CD4-positive, alpha-beta T cell (primary cell): ENCODE measurements at regions of chr20 and their contacts with region 1.

Region 1: DNA sequence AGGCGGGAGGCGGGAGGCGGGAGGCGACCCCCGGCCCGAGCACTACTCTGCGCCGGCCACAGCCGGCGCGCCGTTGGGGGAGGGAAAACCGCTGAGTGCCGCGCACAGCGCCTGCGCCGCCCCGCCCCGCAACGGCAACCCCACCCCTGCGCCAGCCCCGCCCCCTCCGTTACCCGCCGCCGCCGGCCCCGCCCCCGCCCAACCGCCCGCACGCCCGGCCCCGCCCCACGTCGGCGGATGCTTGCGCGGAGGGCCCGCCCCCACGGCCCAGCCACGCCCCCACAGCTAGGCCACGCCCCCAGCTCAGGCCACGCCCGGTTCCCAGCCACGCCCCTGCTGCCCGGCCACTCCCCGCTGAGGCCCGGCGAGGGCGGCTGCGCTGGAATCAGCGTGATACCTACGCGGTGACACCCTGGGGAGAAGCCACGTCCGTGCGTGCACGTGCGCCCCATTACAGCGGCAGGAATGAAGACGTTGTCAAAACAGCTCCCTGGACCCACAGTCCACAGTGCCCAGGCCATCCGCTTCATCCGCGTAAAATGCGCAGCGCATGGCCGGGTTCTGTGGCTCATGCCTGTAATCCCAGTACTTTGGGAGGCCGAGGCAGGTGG is at the start of gene TCFL5:
- DNase-seq: peak; percentile 88 to 98 (median 92)
- ATAC-seq: peak; percentile 87
- H3K4me3 ChIP-seq: peak within 1 kb of the TSS; percentile 39
- H3K4me3 Mint-ChIP-seq: peak within 1 kb of the TSS; percentile 83
- H3K27ac ChIP-seq: peak within 1 kb of the TSS in 1 of 2 donors; percentile 21
- H3K27ac Mint-ChIP-seq: peak within 1 kb of the TSS; percentile 83
- H3K4me1 ChIP-seq: peaks cover 13% of the 10 kb centered on the region
- H3K4me1 Mint-ChIP-seq: peaks cover 27% of the 10 kb centered on the region
- H3K27me3 ChIP-seq: no peaks in the 10 kb centered on the region
- H3K27me3 Mint-ChIP-seq: no peaks in the 10 kb centered on the region
- CTCF ChIP-seq: no peak
- total RNA-seq, gene TCFL5: 5.9 to 6.3 TPM

Region 2: GRCh38 chr20:62808211-62808865 is 53.5 kb before region 1 on chr20:
- CTCF ChIA-PET with region 1: no interaction called
- POLR2A ChIA-PET with region 1: interaction called, 4 read pairs
- intact Hi-C with region 1: loop called in 1 of 2 experiments (anchors 5 kb)
- DNase-seq: peak; percentile 64 to 85 (median 72)
- ATAC-seq: peak; percentile 58
- H3K4me3 ChIP-seq: no peak overlapping the region
- H3K4me3 Mint-ChIP-seq: peak overlapping the region; percentile 89
- H3K27ac ChIP-seq: no peak overlapping the region
- H3K27ac Mint-ChIP-seq: peak overlapping the region; percentile 84
- H3K4me1 ChIP-seq: peaks cover 41% of the 10 kb centered on the region
- H3K4me1 Mint-ChIP-seq: peaks cover 28% of the 10 kb centered on the region
- H3K27me3 ChIP-seq: no peaks in the 10 kb centered on the region
- H3K27me3 Mint-ChIP-seq: peaks cover 4% of the 10 kb centered on the region
- CTCF ChIP-seq: peak; percentile 91

Region 3: GRCh38 chr20:62891111-62891510 is 29.3 kb after region 1 on chr20:
- CTCF ChIA-PET with region 1: no interaction called
- POLR2A ChIA-PET with region 1: interaction called, 11 read pairs
- intact Hi-C with region 1: no loop called
- DNase-seq: peak in 12 of 14 experiments; percentile 16 to 78 (median 61)
- ATAC-seq: peak; percentile 71
- H3K4me3 ChIP-seq: no peak overlapping the region
- H3K4me3 Mint-ChIP-seq: peak overlapping the region; percentile 32
- H3K27ac ChIP-seq: peak overlapping the region; percentile 14 to 68
- H3K27ac Mint-ChIP-seq: peak overlapping the region; percentile 96
- H3K4me1 ChIP-seq: peaks cover 64% of the 10 kb centered on the region
- H3K4me1 Mint-ChIP-seq: peaks cover 45% of the 10 kb centered on the region
- H3K27me3 ChIP-seq: no peaks in the 10 kb centered on the region
- H3K27me3 Mint-ChIP-seq: no peaks in the 10 kb centered on the region
- CTCF ChIP-seq: no peak

Region 4: GRCh38 chr20:62926239-62927104 is 64.6 kb after region 1 on chr20 and contains the start of gene DIDO1:
- CTCF ChIA-PET with region 1: no interaction called
- POLR2A ChIA-PET with region 1: interaction called, 9 read pairs
- intact Hi-C with region 1: loop called in 1 of 2 experiments (anchors 2 kb)
- DNase-seq: peak; percentile 78 to 96 (median 90)
- ATAC-seq: peak; percentile 74
- H3K4me3 ChIP-seq: peak within 1 kb of the TSS; percentile 99
- H3K4me3 Mint-ChIP-seq: peak within 1 kb of the TSS; percentile 98
- H3K27ac ChIP-seq: peak within 1 kb of the TSS; percentile 86 to 89
- H3K27ac Mint-ChIP-seq: peak within 1 kb of the TSS; percentile 89
- H3K4me1 ChIP-seq: peaks cover 72% of the 10 kb centered on the region
- H3K4me1 Mint-ChIP-seq: peaks cover 87% of the 10 kb centered on the region
- H3K27me3 ChIP-seq: no peaks in the 10 kb centered on the region
- H3K27me3 Mint-ChIP-seq: no peaks in the 10 kb centered on the region
- CTCF ChIP-seq: peak; percentile 64
- total RNA-seq, gene DIDO1: 51.9 to 54.3 TPM

Region 5: DNA sequence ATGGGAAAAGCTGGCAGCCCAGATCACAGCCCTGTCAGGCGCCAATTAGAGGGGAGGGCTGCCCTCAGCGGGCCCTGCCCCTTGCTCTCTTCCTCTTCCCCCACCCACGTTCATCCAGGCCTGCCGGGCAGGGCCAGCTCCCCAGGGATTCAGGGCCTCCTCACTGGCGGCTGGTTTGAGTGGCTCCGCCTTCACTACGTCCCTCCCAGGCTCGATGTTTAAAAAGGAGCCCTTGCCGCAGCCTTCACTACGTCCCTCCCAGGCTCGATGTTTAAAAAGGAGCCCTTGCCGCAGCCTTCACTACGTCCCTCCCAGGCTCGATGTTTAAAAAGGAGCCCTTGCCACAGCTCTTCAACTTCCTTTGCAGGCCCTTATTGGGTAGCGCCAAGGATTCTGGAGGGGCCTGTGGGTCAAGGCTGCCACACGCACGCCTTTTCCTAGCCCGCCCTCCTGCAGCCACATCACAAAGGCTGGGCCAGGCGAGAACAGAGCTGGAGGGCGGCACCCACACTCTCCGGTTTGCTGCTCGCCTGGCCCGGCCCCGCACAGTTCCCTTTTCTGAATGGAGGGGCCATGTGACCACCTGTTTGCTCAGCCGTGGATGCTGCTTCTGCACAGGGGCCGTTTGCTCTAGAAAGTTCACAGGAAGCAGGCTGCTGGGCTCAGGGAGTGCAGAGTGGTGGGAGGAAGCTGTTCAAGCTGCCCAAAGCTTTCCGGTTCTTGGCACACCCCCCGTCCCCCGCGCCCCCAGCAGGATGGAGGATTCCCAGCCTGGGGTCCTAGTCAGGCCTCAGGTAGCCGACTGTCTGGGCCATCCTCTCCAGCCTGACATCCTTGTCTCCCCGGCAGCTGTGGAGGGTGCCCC is 92.2 kb after region 1 on chr20:
- CTCF ChIA-PET with region 1: no interaction called
- POLR2A ChIA-PET with region 1: interaction called, 10 read pairs
- intact Hi-C with region 1: no loop called
- DNase-seq: peak; percentile 48 to 88 (median 68)
- ATAC-seq: peak; percentile 87
- H3K4me3 ChIP-seq: peak overlapping the region; percentile 46
- H3K4me3 Mint-ChIP-seq: peak overlapping the region; percentile 88
- H3K27ac ChIP-seq: peak overlapping the region; percentile 17 to 78
- H3K27ac Mint-ChIP-seq: peak overlapping the region; percentile 90
- H3K4me1 ChIP-seq: peaks cover 49% of the 10 kb centered on the region
- H3K4me1 Mint-ChIP-seq: peaks cover 31% of the 10 kb centered on the region
- H3K27me3 ChIP-seq: no peaks in the 10 kb centered on the region
- H3K27me3 Mint-ChIP-seq: no peaks in the 10 kb centered on the region
- CTCF ChIP-seq: no peak